ENCODE measurements at regions of chr15 and their contacts with region 1.

Region 1: DNA sequence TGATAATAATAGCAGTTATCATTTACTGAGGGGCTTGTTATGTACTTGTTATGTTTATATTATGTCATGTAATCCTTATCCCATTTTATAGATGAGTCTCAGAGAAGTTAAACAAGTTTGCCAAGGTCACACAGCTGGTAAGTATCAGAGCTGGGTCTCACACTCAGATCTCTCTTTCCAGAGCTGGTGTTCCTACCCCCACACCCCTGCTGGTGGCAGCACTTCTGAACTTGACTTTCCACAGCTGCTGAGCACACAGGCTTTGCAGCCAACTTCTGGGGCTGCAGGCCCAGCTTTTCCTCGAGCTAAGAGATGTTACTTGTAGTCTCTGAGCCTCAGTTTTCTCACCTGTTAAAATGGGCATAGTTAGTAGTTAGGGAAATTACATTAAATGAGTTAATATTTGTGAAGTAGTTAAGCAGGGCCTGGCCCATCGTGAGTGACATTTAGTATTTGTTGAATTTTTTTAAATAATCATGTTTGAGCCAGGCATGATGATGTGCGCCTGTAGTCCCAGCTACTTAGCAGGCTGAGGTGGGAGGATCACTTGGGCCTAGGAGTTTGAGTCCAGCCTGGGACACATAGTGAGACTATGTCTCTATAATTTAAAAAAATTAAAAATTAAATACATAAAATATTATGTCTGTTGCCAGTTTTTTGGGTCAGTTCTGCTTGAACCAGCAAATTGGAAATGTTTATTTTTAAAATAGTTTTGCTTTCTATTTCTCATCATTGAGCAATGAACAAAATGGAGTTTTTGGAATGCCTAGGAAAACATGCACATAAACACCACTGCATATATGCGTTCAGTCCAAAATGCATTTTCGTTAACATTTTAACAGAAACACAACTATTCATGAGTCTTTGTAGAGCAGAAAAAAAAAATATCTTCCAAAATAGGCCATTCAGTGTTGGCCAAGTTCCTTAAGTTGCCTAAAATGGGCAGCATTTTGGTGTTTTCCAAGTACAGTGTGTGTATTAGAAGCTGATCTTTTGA is 87.3 kb downstream of the SMAD6 start:
- DNase-seq: peak; percentile 81
- ATAC-seq: peak; percentile 70
- H3K4me3 ChIP-seq: no peak overlapping the region
- H3K27ac ChIP-seq: peak overlapping the region; percentile 100
- H3K4me1 ChIP-seq: peaks cover 41% of the 10 kb centered on the region
- H3K27me3 ChIP-seq: no peaks in the 10 kb centered on the region
- CTCF ChIP-seq: peak; percentile 59
- POLR2A ChIP-seq: no peak
- RAD21 ChIP-seq: peak; percentile 57

Region 2: DNA sequence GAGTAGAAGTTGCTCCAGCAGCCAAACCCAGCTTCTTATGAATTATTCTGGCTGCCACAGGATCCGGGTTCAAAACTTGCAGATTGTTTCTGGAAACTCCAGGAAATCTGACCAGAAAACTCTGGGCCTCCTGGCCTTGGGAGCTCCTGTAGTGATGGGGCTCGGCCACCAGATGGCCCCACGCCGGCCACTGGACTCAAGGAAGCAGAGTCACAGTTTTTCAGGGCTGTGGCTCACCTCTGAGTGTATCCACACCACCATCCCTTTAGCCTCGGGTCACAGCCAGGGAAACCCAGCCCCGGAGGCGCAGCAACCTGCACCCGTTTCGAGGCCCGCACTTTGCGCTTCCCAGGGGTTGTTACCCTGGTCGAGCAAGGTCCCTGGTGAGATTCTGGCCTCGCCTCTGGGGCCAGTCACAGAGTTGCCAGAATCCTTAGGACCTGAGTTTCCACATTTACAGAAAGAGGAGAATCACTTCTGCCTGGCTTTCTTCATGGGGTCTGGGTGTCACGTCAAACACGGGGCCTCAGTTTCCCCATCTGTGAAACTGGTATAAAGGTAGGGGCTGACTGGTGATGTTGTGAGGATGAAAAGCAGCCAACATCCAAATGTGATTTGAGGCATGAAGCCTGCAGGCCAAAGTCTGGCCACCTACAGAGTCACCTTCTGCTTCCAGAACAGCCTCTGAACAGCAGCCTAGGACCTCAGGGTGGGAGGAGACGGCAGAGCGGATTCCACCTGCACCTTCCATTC is 170.0 kb before region 1 on chr15:
- CTCF ChIA-PET with region 1: interaction called, 3 read pairs
- POLR2A ChIA-PET with region 1: no interaction called
- dilution Hi-C with region 1: no loop called
- in situ Hi-C with region 1: no loop called
- intact Hi-C with region 1: loop called (anchors 5 kb)
- DNase-seq: peak; percentile 68
- ATAC-seq: peak; percentile 92
- H3K4me3 ChIP-seq: no peak overlapping the region
- H3K27ac ChIP-seq: no peak overlapping the region
- H3K4me1 ChIP-seq: peaks cover 15% of the 10 kb centered on the region
- H3K27me3 ChIP-seq: no peaks in the 10 kb centered on the region
- CTCF ChIP-seq: peak; percentile 94
- POLR2A ChIP-seq: no peak
- RAD21 ChIP-seq: peak; percentile 85

Region 3: DNA sequence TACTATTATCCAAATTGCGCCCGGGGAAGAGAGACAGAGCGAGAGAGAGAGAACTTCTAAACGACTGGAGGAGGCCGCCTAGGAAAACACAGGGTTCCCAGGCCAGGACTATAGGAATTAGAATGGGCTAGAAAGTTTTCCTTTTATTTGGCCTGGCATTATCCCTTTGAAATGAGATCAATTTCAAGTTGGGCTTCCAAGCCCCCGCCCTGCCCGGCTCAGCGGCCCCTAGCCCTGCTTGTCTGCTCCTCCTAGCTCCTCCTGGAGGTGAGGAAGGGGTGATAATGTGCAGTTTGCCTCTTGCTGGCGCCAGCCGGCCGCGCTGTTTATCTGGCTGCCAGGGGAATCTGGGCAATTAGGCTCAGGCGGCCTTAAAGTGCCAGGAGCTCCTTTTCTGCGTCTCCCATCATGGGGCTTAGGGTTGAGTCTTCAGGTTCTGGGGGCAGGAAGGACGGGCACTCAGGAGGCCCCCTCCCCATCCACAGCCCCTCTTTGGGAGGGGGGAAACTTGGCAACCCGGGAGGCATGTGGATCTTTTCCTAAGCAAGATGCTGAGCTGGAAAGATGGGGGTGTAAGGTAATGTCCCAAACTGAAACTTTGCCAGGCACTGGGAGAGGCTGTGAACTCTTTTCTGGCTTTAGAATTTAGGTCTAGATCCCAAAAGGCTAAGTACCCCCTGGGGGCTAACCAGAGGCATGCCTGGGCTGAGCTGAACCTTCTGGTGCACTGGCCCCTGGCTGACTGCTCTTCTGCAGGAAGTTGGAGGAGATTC is 81.8 kb before region 1 on chr15:
- CTCF ChIA-PET with region 1: no interaction called
- POLR2A ChIA-PET with region 1: no interaction called
- dilution Hi-C with region 1: no loop called
- in situ Hi-C with region 1: no loop called
- intact Hi-C with region 1: loop called (anchors 5 kb)
- DNase-seq: peak; percentile 43
- ATAC-seq: peak; percentile 36
- H3K4me3 ChIP-seq: no peak overlapping the region
- H3K27ac ChIP-seq: peak overlapping the region; percentile 30
- H3K4me1 ChIP-seq: peaks cover 34% of the 10 kb centered on the region
- H3K27me3 ChIP-seq: no peaks in the 10 kb centered on the region
- CTCF ChIP-seq: peak; percentile 34
- POLR2A ChIP-seq: no peak
- RAD21 ChIP-seq: peak; percentile 15; the same call in 1 of the 2 replicates

Region 4: DNA sequence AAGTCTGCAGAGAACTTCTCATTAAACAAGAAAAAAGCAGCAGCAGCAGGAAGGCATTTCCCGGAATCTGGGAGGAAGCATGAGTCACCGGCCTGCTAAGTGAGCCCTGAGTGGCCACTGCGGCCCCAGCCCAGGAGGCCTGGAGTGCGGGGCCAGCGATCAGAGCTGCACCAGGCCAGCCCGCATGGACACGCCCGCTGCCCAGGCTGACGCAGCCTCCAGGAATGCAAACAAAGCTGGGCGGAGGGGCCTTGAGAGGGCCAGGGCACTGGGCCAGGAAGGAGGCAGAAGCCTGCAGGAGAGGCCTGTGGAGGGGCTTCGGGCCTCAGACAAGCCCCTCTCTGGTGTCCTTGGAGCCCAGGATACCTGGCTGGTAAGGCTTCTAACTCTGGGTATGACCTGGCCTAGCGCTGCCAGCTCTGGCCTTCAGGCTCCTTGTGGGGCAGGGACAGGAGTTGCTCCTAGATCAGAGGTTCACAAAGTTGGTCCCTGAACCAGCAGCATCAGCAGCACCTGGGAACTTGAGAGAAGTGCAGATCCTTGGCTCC is 13.9 kb after region 1 on chr15:
- CTCF ChIA-PET with region 1: interaction called, 5 read pairs
- POLR2A ChIA-PET with region 1: no interaction called
- dilution Hi-C with region 1: no loop called
- in situ Hi-C with region 1: no loop called
- intact Hi-C with region 1: loop called (anchors 1 kb)
- DNase-seq: peak; percentile 98
- ATAC-seq: peak; percentile 94
- H3K4me3 ChIP-seq: no peak overlapping the region
- H3K27ac ChIP-seq: peak overlapping the region; percentile 99
- H3K4me1 ChIP-seq: peaks cover 33% of the 10 kb centered on the region
- H3K27me3 ChIP-seq: no peaks in the 10 kb centered on the region
- CTCF ChIP-seq: no peak
- POLR2A ChIP-seq: no peak
- RAD21 ChIP-seq: peak; percentile 40

Region 5: DNA sequence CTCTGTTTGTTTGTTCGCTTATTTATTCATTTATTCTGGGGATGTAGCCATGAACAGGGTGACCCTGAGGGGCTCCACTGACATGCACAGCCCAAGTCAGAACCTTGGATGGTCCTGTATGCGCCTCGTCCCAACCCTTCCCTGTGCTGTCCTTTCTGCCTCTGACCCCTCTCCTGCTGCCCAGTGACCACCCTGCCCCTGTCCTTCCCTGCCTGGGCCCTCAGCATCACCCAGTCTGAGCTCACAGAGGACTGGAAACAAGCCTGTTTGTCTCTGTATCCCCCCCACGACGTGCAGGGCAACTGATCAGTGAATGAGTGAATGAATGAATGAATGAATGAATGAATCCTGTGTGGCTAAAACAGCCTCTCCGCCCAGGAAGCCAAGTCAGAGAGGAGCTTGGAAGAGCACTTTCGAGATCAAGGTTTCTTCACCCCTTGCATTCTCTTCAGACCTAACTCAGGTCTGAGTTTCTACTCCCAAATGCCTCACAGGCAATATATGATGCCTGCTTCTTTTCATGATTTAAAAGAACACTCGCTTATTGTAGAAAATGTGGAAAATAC is 70.4 kb after region 1 on chr15:
- CTCF ChIA-PET with region 1: no interaction called
- POLR2A ChIA-PET with region 1: no interaction called
- dilution Hi-C with region 1: no loop called
- in situ Hi-C with region 1: no loop called
- intact Hi-C with region 1: no loop called
- DNase-seq: no peak
- ATAC-seq: no peak
- H3K4me3 ChIP-seq: no peak overlapping the region
- H3K27ac ChIP-seq: no peak overlapping the region
- H3K4me1 ChIP-seq: peaks cover 7% of the 10 kb centered on the region
- H3K27me3 ChIP-seq: no peaks in the 10 kb centered on the region
- CTCF ChIP-seq: no peak
- POLR2A ChIP-seq: no peak
- RAD21 ChIP-seq: no peak

Measured in IMR-90 (cell line).